ENCODE measurements at regions of chr11 and their contacts with region 1.

Region 1: DNA sequence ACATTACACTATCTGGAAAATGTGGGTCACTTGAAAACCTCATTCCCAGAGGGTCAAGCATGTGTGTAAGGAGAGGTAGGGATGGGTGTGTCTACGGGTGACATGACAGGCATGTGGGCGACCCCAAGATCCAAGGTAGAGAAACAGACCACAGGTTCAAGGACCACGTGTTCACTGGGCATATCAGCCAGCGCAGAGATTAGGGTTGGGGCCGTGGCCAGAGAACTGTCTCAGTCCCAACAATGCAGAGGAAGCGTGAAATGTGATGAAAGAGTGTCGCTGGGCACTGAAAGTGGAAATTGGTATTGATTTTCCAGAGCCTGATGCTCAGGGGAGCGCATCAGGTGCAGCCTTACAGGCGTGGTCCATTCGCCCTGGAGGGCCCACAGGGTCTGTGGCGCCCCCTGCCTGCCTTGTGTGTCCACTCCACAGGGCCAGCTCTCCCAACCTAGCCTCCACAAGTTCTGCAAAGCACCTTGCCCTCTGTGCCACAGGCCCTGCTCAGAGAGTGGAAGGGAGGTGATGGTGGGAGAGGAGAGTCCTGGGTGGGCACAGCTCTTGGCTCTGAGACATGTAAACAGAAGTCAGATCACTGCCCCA is 54.8 kb upstream of the LMO1 start:
- DNase-seq: peak; percentile 37 to 50 (median 48)
- ATAC-seq: peak; percentile 94
- H3K4me3 ChIP-seq: no peak overlapping the region
- H3K27ac ChIP-seq: no peak overlapping the region
- H3K4me1 ChIP-seq: no peaks in the 10 kb centered on the region
- H3K27me3 ChIP-seq: peaks cover 16 to 40% of the 10 kb centered on the region in 2 experiments
- CTCF ChIP-seq: peak; percentile 54 to 60 (median 54)
- EP300 ChIP-seq: no peak
- POLR2A ChIP-seq: no peak
- RAD21 ChIP-seq: peak in 1 of 2 experiments; percentile 52; a peak in 2 of 4 replicates

Region 2: GRCh38 chr11:8225589-8226036 is 92.8 kb before region 1 on chr11:
- CTCF ChIA-PET with region 1: no interaction called
- POLR2A ChIA-PET with region 1: no interaction called
- in situ Hi-C with region 1: no loop called
- intact Hi-C with region 1: loop called (anchors 1 kb)
- DNase-seq: peak; percentile 72 to 91 (median 86)
- ATAC-seq: peak; percentile 90
- H3K4me3 ChIP-seq: no peak overlapping the region
- H3K27ac ChIP-seq: no peak overlapping the region
- H3K4me1 ChIP-seq: no peaks in the 10 kb centered on the region
- H3K27me3 ChIP-seq: peaks cover 8 to 58% of the 10 kb centered on the region in 2 experiments; a peak in 4 of 5 replicates
- CTCF ChIP-seq: peak; percentile 82 to 87 (median 82)
- EP300 ChIP-seq: no peak
- POLR2A ChIP-seq: no peak
- RAD21 ChIP-seq: peak; percentile 69 to 80

Region 3: GRCh38 chr11:8512547-8512946 is 194.1 kb after region 1 on chr11:
- CTCF ChIA-PET with region 1: no interaction called
- POLR2A ChIA-PET with region 1: no interaction called
- in situ Hi-C with region 1: no loop called
- intact Hi-C with region 1: no loop called
- DNase-seq: no peak
- ATAC-seq: no peak
- H3K4me3 ChIP-seq: no peak overlapping the region
- H3K27ac ChIP-seq: no peak overlapping the region
- H3K4me1 ChIP-seq: no peaks in the 10 kb centered on the region
- H3K27me3 ChIP-seq: no peaks in the 10 kb centered on the region
- CTCF ChIP-seq: no peak
- EP300 ChIP-seq: no peak
- POLR2A ChIP-seq: no peak
- RAD21 ChIP-seq: no peak